Activated CD4-positive, alpha-beta memory T cell treated with anti-CD3 and anti-CD28 coated beads for 36 hours (primary cell): ENCODE measurements at regions of chr4 and their contacts with region 1.

Region 1: GRCh38 chr4:5812506-5813229 is 80.2 kb downstream of the CRMP1 start:
- DNase-seq: no peak
- H3K4me3 Mint-ChIP-seq: no peak overlapping the region
- H3K27ac Mint-ChIP-seq: no peak overlapping the region
- H3K4me1 Mint-ChIP-seq: no peaks in the 10 kb centered on the region
- H3K27me3 Mint-ChIP-seq: no peaks in the 10 kb centered on the region

Region 2: GRCh38 chr4:4995103-4995907 is 817.4 kb before region 1 on chr4:
- CTCF ChIA-PET with region 1: interaction called, 3 read pairs
- POLR2A ChIA-PET with region 1: no interaction called
- intact Hi-C with region 1: loop called (anchors 1 kb)
- DNase-seq: peak; percentile 57
- H3K4me3 Mint-ChIP-seq: no peak overlapping the region
- H3K27ac Mint-ChIP-seq: no peak overlapping the region
- H3K4me1 Mint-ChIP-seq: no peaks in the 10 kb centered on the region
- H3K27me3 Mint-ChIP-seq: peaks cover 12% of the 10 kb centered on the region

Region 3: DNA sequence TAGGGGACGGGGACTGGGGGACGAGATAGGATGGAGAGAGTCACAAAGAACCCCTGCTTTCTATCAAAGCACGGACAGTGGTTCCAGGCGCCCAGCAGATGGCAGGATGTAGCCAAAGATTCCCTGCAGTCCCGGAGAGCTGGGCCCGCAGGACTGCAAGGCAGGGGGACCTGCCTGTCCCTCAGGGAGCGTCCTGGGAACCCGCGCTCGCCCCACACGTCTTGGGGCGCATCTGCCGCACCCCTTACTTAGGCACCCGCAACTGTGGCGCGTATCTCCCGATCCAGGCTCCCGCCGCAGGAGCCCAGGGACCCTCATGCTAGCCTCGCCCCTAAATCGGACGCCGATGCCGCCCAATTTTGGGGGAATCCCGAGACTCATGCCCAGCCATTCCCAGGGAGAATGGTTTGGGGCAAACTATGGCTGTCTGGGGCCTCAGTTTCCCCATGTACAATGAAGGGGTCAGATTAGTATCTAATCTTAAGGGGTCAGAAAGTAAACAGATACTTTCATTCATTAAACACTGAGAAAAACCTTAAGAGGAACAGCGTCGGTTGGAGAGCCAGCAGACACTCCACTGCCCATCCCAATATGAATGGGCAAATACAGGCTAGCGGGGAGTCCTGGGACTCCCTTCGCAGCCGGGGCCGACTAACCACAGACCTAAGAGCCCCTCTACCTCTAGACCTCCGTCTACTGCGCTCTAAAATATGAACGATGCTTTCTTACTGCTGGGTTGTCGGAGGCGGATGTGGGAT is 762.0 kb before region 1 on chr4:
- CTCF ChIA-PET with region 1: interaction called, 3 read pairs
- POLR2A ChIA-PET with region 1: no interaction called
- intact Hi-C with region 1: loop called (anchors 2 kb)
- DNase-seq: peak; percentile 43
- H3K4me3 Mint-ChIP-seq: peak overlapping the region; percentile 42
- H3K27ac Mint-ChIP-seq: no peak overlapping the region
- H3K4me1 Mint-ChIP-seq: peaks cover 5% of the 10 kb centered on the region
- H3K27me3 Mint-ChIP-seq: peaks cover 51% of the 10 kb centered on the region

Region 4: DNA sequence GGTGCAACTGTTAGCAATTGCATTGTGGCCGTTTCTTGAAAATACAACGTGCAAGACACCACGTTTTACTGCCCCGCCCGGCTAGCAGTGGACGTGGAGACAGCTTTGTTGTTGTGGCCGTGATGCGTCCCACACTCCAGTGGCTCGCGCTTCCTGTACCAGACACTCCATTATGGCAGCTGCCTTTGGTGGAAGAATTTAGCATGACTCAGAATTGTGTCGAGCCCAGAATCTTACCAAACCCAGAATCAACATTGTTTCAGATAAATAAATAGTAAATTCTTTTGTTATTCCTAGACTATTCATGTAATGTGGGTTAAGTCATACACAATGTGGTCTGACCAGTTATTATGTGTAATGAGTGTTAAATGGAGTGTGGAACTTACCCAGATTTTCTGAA is 855.7 kb after region 1 on chr4:
- CTCF ChIA-PET with region 1: no interaction called
- POLR2A ChIA-PET with region 1: no interaction called
- intact Hi-C with region 1: no loop called
- DNase-seq: no peak
- H3K4me3 Mint-ChIP-seq: no peak overlapping the region
- H3K27ac Mint-ChIP-seq: no peak overlapping the region
- H3K4me1 Mint-ChIP-seq: peaks cover 4% of the 10 kb centered on the region
- H3K27me3 Mint-ChIP-seq: no peaks in the 10 kb centered on the region